WTC11 (cell line): ENCODE measurements at regions of chr11 and their contacts with region 1.

Region 1: DNA sequence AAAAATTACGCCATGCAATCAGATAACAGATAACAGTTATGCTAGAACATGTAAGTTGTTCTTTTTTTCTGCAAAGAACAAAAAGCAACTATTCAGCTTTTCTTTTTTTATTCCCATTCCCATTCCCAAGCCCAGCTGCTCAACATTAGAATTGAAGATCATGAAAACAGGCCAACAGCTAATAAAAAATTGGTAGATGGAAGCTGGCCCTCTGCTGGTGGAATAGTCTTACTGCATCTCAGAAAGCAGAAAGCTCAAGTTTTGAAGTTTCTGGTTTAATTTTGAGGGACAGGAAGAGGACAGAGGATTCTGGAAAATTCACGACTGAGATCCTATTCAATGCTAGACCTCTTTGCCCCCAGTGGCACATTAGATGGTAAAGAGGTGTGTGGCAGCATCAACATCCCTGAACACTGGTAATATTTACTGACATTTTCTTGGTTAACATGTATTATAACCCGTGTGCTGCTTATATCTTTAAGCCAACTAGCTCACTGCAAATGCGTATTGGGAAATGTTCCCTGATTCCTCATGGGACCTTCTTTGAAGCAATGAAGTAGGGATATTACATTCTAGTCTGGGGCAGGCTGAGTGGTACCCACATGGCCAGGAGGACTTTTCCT is 591.2 kb downstream of the OPCML start:
- DNase-seq: no peak
- ATAC-seq: no peak
- H3K4me3 Mint-ChIP-seq: no peak overlapping the region
- H3K27ac Mint-ChIP-seq: no peak overlapping the region
- H3K4me1 Mint-ChIP-seq: peaks cover 40% of the 10 kb centered on the region
- H3K27me3 Mint-ChIP-seq: peaks cover 44% of the 10 kb centered on the region
- CTCF ChIP-seq: peak; percentile 88

Region 2: DNA sequence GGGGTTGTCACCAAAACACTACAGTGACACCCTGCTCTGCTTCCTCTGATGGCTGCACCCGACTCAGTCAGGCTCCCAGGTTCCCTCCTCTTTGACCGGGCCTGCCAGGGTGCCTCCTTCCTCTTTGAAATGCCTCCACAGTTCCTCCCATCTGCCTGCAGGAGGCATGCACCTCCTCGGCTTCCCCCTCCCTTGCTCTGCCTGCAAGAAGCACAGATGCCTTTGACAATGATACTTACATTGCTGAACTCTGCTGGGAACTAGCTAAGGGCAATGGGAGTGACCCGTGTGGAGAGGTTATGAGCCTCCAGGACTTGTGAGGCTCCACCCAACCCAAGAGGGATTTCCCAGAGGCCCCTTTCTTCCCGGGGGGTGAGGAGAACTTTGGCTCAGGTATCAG is 82.9 kb before region 1 on chr11:
- CTCF ChIA-PET with region 1: interaction called, 10 read pairs
- POLR2A ChIA-PET with region 1: no interaction called
- DNase-seq: peak; percentile 62
- ATAC-seq: peak; percentile 98
- H3K4me3 Mint-ChIP-seq: no peak overlapping the region
- H3K27ac Mint-ChIP-seq: no peak overlapping the region
- H3K4me1 Mint-ChIP-seq: peaks cover 34% of the 10 kb centered on the region
- H3K27me3 Mint-ChIP-seq: no peaks in the 10 kb centered on the region; the same call in 1 of the 2 replicates
- CTCF ChIP-seq: no peak

Region 3: GRCh38 chr11:132864811-132865576 is 76.1 kb before region 1 on chr11:
- CTCF ChIA-PET with region 1: interaction called, 12 read pairs
- POLR2A ChIA-PET with region 1: no interaction called
- DNase-seq: peak; percentile 55
- ATAC-seq: peak; percentile 95
- H3K4me3 Mint-ChIP-seq: no peak overlapping the region
- H3K27ac Mint-ChIP-seq: no peak overlapping the region
- H3K4me1 Mint-ChIP-seq: peaks cover 26% of the 10 kb centered on the region
- H3K27me3 Mint-ChIP-seq: no peaks in the 10 kb centered on the region
- CTCF ChIP-seq: no peak

Region 4: GRCh38 chr11:132957881-132958280 is 16.7 kb after region 1 on chr11:
- CTCF ChIA-PET with region 1: interaction called, 12 read pairs
- POLR2A ChIA-PET with region 1: interaction called, 3 read pairs
- DNase-seq: no peak
- ATAC-seq: no peak
- H3K4me3 Mint-ChIP-seq: no peak overlapping the region
- H3K27ac Mint-ChIP-seq: no peak overlapping the region
- H3K4me1 Mint-ChIP-seq: peaks cover 25% of the 10 kb centered on the region
- H3K27me3 Mint-ChIP-seq: no peaks in the 10 kb centered on the region; the same call in 1 of the 2 replicates
- CTCF ChIP-seq: no peak

Region 5: DNA sequence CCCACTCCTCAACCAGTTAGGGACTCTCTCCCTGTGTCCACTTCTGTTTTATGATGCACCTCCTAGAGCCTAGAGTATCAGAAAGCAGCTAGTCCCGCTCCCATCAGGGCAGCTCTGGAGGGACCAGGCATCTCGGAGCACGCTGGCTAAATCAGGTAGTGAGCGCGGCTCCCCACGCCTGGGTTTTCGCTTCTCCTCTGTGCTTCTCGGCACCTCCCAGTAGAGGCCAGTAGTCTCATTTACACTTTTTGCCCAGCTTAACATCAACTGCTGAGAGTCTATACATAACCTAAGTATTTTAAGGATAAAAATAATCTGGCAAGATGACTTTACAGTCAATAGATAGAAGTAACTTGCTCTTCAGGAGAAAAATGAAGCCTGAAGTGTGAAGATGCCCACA is 117.4 kb after region 1 on chr11:
- CTCF ChIA-PET with region 1: interaction called, 71 read pairs
- POLR2A ChIA-PET with region 1: no interaction called
- DNase-seq: peak; percentile 35
- ATAC-seq: peak; percentile 93
- H3K4me3 Mint-ChIP-seq: no peak overlapping the region
- H3K27ac Mint-ChIP-seq: no peak overlapping the region
- H3K4me1 Mint-ChIP-seq: peaks cover under 1% of the 10 kb centered on the region; the same call in 1 of the 2 replicates
- H3K27me3 Mint-ChIP-seq: peaks cover 8% of the 10 kb centered on the region
- CTCF ChIP-seq: no peak

Region 6: DNA sequence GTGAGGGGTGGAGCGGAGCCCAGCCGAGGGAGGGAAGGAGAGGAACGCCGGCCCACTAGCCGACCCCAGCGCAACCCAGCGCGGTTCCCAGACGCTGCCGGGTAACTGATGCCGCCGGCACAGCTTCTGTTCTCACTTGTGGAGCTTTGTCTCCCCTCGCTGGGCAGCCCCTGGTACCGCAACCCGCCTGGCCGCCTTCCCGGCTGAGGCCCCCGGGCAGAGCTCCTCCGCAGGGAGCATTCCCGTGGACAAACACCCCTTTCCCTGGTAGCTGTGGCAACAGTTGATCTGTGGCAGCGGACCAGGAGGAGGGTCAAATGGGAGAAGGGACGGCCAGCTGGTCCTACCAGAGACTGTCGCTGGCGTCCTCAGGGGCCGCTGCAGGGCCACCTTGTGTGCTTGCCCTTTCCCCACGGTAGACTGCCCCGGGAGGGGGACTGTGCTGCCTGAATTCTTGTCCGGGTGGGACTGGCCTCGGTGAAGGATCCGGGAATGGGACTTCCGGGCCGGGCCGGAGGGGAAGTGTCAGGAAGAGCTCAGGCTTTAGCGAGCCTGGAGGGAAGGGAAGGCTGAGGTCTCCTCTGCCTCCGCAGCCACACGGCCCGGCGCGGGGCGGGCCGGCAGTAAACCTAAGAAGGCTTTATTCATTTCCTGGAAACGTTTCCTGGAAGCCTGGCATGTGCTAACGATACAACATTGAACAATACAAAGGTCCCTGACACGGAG is 123.2 kb after region 1 on chr11:
- CTCF ChIA-PET with region 1: interaction called, 71 read pairs
- POLR2A ChIA-PET with region 1: interaction called, 6 read pairs
- DNase-seq: peak; percentile 90
- ATAC-seq: peak; percentile 90
- H3K4me3 Mint-ChIP-seq: peak overlapping the region; percentile 72
- H3K27ac Mint-ChIP-seq: no peak overlapping the region
- H3K4me1 Mint-ChIP-seq: peaks cover 18% of the 10 kb centered on the region
- H3K27me3 Mint-ChIP-seq: peaks cover 10% of the 10 kb centered on the region
- CTCF ChIP-seq: peak; percentile 37; the same call in 1 of the 2 replicates

Region 7: DNA sequence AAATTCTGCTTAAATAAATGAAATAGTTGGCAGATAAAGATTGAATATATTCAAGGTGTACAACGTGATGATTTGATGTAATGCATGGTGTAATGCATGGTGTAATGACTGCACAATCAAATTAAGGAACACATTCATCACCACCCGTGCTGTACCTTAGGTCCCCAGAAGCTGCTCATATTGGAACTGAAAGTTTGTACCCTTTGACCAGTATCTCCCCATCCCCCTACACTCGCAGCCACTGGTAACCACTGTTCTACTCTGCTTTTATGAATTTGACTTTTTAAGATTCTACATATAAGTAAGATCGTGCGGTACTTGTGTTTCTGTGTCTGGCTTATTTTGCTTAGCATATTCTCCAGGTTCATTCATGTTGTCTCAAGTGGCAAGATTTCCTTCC is 145.4 kb after region 1 on chr11:
- CTCF ChIA-PET with region 1: no interaction called
- POLR2A ChIA-PET with region 1: no interaction called
- DNase-seq: no peak
- ATAC-seq: no peak
- H3K4me3 Mint-ChIP-seq: no peak overlapping the region
- H3K27ac Mint-ChIP-seq: no peak overlapping the region
- H3K4me1 Mint-ChIP-seq: peaks cover 7% of the 10 kb centered on the region
- H3K27me3 Mint-ChIP-seq: peaks cover 22% of the 10 kb centered on the region
- CTCF ChIP-seq: no peak

Region 8: GRCh38 chr11:133163463-133164419 is 222.6 kb after region 1 on chr11:
- CTCF ChIA-PET with region 1: no interaction called
- POLR2A ChIA-PET with region 1: no interaction called
- DNase-seq: no peak
- ATAC-seq: peak; percentile 66
- H3K4me3 Mint-ChIP-seq: no peak overlapping the region
- H3K27ac Mint-ChIP-seq: no peak overlapping the region
- H3K4me1 Mint-ChIP-seq: peaks cover 33% of the 10 kb centered on the region
- H3K27me3 Mint-ChIP-seq: no peaks in the 10 kb centered on the region
- CTCF ChIP-seq: peak; percentile 63

Region 9: DNA sequence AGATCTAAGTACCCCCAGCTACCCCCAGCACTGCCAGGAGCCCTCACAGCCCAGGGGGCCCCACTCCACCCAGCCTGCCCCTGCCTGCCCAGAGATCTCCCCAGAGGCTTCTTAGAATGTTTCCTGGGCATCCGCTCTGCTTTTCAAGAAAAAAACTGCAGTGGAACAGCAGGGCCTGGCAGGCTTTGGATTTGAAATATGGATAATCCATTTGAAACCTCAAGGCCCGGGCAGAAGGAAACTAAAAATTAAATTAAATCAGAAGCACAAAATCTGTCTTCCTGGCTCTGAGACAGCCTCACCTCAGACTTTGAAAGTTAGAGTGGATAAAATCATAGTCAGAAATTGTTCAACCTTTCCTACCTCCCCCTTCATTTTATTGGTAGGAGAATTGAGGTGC is 317.6 kb after region 1 on chr11:
- CTCF ChIA-PET with region 1: no interaction called
- POLR2A ChIA-PET with region 1: no interaction called
- DNase-seq: no peak
- ATAC-seq: no peak
- H3K4me3 Mint-ChIP-seq: no peak overlapping the region
- H3K27ac Mint-ChIP-seq: no peak overlapping the region
- H3K4me1 Mint-ChIP-seq: peaks cover 3% of the 10 kb centered on the region; the same call in 1 of the 2 replicates
- H3K27me3 Mint-ChIP-seq: no peaks in the 10 kb centered on the region
- CTCF ChIP-seq: no peak